ENCODE measurements at regions of chr20 and their contacts with region 1.

Region 1: DNA sequence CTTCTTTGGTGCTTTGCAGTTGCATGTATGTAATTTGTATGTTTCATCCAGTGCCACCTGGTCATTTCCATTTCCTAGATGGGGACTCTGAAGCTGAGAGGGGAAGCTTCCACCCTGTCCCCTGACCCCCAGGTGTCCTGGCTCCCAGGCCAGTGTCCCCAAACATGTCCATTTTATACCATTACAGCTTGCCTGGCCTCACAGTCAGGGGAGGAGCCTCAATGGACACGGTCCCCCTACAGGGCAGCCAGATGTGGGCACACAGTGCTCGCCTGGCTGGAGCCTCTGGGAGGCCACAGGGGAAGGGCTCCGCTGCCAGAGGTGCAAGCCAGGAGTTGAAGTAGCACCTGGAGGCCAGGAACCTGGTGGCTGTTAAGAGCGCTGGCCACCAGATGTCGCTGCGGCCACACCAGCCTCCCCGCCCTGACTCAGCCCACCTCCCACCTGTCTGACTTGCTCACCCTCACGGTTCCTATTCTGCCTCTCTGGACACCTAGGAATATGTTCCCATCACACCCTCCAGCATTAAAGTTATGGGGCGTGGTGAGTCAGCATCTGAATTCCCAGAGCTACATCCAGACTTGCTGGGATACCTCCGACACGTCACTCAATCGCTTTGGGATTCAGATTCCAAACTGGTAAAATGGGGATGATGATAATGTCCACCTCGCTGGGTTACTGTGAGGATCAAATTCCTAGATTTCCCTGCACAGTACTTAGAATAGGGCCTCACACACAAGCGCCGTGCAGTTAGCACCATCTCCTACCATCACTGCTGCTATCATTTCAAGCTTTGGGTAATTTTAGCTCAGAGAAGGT is 107.4 kb downstream of the SULF2 start:
- DNase-seq: peak; percentile 85
- ATAC-seq: peak; percentile 76
- H3K4me3 Mint-ChIP-seq: no peak overlapping the region
- H3K27ac Mint-ChIP-seq: no peak overlapping the region
- H3K4me1 Mint-ChIP-seq: peaks cover 13% of the 10 kb centered on the region
- H3K27me3 Mint-ChIP-seq: no peaks in the 10 kb centered on the region
- CTCF ChIP-seq: peak; percentile 89

Region 2: DNA sequence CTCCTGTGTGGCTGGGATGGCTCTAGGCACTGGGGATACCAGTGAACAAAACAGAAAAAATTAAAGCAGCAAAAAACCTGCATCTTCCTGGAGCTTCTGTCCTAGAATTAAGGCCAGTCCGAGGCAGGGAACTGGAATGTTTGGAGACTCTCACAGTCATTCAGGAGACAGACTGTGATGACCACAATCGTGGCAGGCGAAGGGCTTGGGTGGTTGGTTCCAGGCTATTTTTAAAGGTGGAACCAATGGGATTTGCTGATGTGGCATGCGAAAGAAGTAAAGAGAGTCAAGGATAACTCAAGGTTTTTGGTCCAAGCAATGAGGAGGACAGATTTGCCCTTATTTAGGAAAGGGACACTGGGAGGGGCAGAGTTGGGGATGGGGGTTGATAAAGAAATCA is 40.6 kb after region 1 on chr20:
- CTCF ChIA-PET with region 1: no interaction called
- POLR2A ChIA-PET with region 1: no interaction called
- DNase-seq: no peak
- ATAC-seq: no peak
- H3K4me3 Mint-ChIP-seq: no peak overlapping the region
- H3K27ac Mint-ChIP-seq: no peak overlapping the region
- H3K4me1 Mint-ChIP-seq: peaks cover 2% of the 10 kb centered on the region
- H3K27me3 Mint-ChIP-seq: no peaks in the 10 kb centered on the region
- CTCF ChIP-seq: no peak

Region 3: GRCh38 chr20:47785854-47786764 is 108.3 kb after region 1 on chr20:
- CTCF ChIA-PET with region 1: interaction called, 13 read pairs
- POLR2A ChIA-PET with region 1: no interaction called
- DNase-seq: peak; percentile 63
- ATAC-seq: peak; percentile 50
- H3K4me3 Mint-ChIP-seq: peak overlapping the region; percentile 83
- H3K27ac Mint-ChIP-seq: no peak overlapping the region; the same call in 1 of the 2 replicates
- H3K4me1 Mint-ChIP-seq: peaks cover 42% of the 10 kb centered on the region
- H3K27me3 Mint-ChIP-seq: peaks cover 38% of the 10 kb centered on the region
- CTCF ChIP-seq: peak; percentile 35; the same call in 1 of the 2 replicates